Activated CD4-positive, alpha-beta memory T cell treated with anti-CD3 and anti-CD28 coated beads for 36 hours (primary cell): ENCODE measurements at regions of chr20 and their contacts with region 1.

Region 1: GRCh38 chr20:13771853-13772453 is 12.8 kb downstream of the ESF1 start:
- DNase-seq: no peak
- H3K4me3 Mint-ChIP-seq: no peak overlapping the region
- H3K27ac Mint-ChIP-seq: no peak overlapping the region
- H3K4me1 Mint-ChIP-seq: peaks cover 15% of the 10 kb centered on the region
- H3K27me3 Mint-ChIP-seq: no peaks in the 10 kb centered on the region

Region 2: GRCh38 chr20:13755809-13756208 is 16.1 kb before region 1 on chr20:
- CTCF ChIA-PET with region 1: interaction called, 14 read pairs
- POLR2A ChIA-PET with region 1: no interaction called
- intact Hi-C with region 1: no loop called
- DNase-seq: no peak
- H3K4me3 Mint-ChIP-seq: no peak overlapping the region
- H3K27ac Mint-ChIP-seq: no peak overlapping the region
- H3K4me1 Mint-ChIP-seq: no peaks in the 10 kb centered on the region
- H3K27me3 Mint-ChIP-seq: no peaks in the 10 kb centered on the region

Region 3: GRCh38 chr20:13791540-13792459 is 19.8 kb after region 1 on chr20:
- CTCF ChIA-PET with region 1: interaction called, 13 read pairs
- POLR2A ChIA-PET with region 1: no interaction called
- intact Hi-C with region 1: no loop called
- DNase-seq: no peak
- H3K4me3 Mint-ChIP-seq: no peak overlapping the region
- H3K27ac Mint-ChIP-seq: no peak overlapping the region
- H3K4me1 Mint-ChIP-seq: peaks cover 9% of the 10 kb centered on the region
- H3K27me3 Mint-ChIP-seq: no peaks in the 10 kb centered on the region

Region 4: GRCh38 chr20:13910492-13910891 is 138.5 kb after region 1 on chr20:
- CTCF ChIA-PET with region 1: no interaction called
- POLR2A ChIA-PET with region 1: no interaction called
- intact Hi-C with region 1: no loop called
- DNase-seq: no peak
- H3K4me3 Mint-ChIP-seq: no peak overlapping the region
- H3K27ac Mint-ChIP-seq: no peak overlapping the region
- H3K4me1 Mint-ChIP-seq: no peaks in the 10 kb centered on the region
- H3K27me3 Mint-ChIP-seq: no peaks in the 10 kb centered on the region